ENCODE measurements at regions of chr13 and their contacts with region 1.

Region 1: DNA sequence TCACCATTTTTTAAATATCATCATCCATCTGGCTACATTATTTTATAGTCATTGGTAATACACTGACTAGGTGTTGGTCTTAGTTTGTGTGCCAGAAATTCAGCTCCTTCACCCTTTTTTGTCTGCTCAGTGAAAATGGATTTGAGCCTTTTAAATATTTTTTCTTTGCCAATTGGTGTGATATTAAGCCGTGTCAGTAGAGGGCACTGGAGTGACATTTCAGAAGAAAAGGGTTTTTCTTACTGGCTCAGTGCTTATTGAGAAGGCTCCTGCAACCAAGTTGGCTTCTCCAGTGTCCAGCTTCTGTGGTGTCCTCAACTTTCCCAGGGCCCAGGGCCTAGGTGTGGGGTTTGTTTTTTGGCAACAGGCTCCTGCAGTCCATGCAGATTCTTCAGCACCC is 546.6 kb downstream of the DACH1 start:
- DNase-seq: peak; percentile 25
- H3K4me3 Mint-ChIP-seq: no peak overlapping the region
- H3K27ac Mint-ChIP-seq: no peak overlapping the region
- H3K4me1 Mint-ChIP-seq: no peaks in the 10 kb centered on the region
- H3K27me3 Mint-ChIP-seq: no peaks in the 10 kb centered on the region

Region 2: DNA sequence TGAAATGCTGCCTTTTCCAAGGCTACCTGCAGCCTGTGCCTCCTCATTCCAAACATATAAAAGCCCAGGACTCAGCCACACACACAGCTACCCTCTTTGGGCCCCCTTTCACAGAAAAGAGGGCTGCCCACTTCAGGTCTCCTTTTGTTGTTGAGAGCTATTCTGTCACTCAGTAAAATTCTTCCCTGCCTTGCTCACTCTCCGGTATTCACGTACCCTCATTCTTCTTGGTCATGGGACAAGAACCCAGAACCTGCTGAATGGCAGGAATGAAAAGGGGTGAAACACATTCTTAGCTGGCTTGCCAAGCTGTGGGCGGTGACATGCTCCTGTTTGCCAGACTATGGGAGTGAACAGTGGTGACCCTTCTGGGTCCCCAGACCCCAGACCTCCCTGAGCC is 1550.8 kb before region 1 on chr13:
- CTCF ChIA-PET with region 1: no interaction called
- intact Hi-C with region 1: no loop called
- DNase-seq: no peak
- H3K4me3 Mint-ChIP-seq: no peak overlapping the region
- H3K27ac Mint-ChIP-seq: no peak overlapping the region
- H3K4me1 Mint-ChIP-seq: no peaks in the 10 kb centered on the region
- H3K27me3 Mint-ChIP-seq: no peaks in the 10 kb centered on the region

Region 3: DNA sequence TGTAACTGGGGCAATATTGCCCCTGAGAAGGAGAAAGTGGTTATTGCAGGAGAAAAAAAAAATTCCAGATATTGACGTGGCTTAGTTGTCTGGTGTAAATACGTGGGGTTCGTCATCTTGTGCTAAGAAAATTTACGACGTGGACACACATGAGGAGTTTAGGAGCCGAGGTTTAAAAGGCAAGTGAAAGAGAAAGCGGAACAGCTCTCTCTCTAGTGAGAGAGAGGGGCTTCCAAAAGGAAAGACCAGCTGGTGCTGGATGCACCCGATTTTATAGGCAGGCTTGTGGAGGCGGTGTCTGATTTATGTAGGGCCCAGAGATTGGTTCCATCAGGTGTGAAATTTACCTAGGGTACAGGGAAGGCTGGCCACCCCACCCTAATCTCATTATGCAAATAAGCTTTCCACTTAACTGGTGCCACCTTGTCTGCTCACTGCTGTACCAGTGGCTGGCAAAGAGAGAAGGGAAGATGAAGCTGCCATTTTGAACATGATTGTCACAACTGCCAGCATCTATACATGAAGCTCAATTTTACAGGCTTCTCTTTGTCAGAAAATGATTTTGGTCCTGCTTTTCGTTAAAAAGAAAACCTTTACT is 298.5 kb before region 1 on chr13:
- CTCF ChIA-PET with region 1: no interaction called
- intact Hi-C with region 1: no loop called
- DNase-seq: no peak
- H3K4me3 Mint-ChIP-seq: no peak overlapping the region
- H3K27ac Mint-ChIP-seq: no peak overlapping the region
- H3K4me1 Mint-ChIP-seq: no peaks in the 10 kb centered on the region
- H3K27me3 Mint-ChIP-seq: no peaks in the 10 kb centered on the region

Region 4: DNA sequence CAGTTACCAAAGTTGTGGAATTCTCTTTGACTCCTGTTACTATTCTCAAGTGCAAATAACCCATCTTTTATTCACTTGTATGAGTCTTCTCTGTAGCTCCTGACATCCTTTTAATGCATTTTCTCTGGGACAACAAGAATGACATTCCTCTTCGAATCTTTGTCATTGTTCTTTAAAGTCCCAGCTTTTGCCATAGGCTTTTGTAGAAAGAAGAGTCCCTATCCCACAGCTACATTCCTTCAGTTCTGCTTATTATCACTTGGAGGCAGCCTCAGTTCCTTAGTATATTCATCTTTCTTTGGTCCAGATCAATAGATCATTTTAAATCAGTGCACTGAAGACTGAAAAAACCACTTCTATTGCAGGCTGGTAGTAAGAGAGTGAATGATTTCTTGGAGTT is 13.6 kb before region 1 on chr13:
- CTCF ChIA-PET with region 1: no interaction called
- intact Hi-C with region 1: no loop called
- DNase-seq: no peak
- H3K4me3 Mint-ChIP-seq: no peak overlapping the region
- H3K27ac Mint-ChIP-seq: no peak overlapping the region
- H3K4me1 Mint-ChIP-seq: no peaks in the 10 kb centered on the region
- H3K27me3 Mint-ChIP-seq: no peaks in the 10 kb centered on the region

Region 5: DNA sequence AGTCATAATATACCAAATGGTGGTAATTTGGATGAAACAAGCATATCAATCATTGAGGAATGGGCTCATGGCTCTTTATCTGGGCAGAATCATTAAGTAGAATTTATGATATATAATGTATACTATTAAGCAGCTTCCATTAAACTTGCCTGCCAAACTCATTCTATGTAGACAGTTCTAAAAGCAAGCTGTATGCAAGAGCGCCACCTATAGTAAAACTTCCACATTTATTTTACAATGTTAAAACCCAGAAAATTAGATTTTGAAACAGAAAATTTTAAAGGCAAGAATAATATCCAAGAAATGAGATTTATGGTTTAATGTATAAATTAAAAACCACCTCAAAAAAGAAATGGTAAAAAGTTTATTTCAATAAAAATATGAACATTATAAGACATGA is 1245.4 kb after region 1 on chr13:
- CTCF ChIA-PET with region 1: no interaction called
- intact Hi-C with region 1: loop called (anchors 10 kb)
- DNase-seq: no peak
- H3K4me3 Mint-ChIP-seq: no peak overlapping the region
- H3K27ac Mint-ChIP-seq: no peak overlapping the region
- H3K4me1 Mint-ChIP-seq: no peaks in the 10 kb centered on the region
- H3K27me3 Mint-ChIP-seq: peaks cover 12% of the 10 kb centered on the region